ENCODE measurements at regions of chr19 and their contacts with region 1.

Region 1: DNA sequence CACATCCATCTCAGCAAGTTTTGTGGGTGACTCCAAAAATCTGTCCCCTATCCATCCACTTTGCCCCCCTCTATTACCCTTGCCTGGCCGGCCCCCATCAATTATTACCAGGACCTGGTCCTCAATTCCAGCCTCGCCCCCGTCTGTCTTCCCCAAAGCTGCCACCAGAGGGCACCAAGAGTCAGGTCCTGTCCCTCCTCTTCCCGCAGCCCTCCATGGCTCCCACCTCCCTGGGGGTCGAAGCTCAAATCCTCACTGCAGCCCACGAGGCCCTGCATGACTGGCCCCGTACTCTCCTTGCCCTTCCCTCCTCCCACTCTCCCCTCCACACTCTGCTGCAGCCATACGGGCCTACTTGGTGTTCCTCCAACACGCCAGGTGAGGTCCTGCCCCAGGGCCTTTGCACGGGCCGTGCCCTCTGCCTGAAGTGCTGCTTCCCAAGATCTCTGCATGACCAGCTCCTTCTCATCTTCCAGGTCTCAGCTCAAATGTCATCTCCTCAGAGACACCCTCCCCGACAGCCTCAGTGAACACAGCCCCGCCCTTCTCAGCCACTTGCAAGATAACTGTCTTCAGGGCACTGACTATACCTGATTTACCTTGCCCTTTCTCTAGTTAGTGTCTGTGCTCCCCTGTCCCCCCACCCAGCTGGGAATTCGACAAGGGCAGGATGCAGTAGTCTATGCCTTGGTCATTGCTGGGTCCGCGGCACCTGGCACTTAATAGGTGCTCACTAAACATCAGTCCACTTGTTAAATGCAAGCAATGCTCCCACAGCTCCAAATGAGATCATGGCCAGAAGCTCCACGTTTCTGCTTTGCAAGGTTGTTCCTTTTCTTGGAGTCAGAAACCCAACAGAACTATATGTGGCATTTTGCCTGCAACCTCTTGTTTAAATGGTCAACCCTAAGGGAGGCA is 16.8 kb upstream of the SEMA6B start:
- DNase-seq: peak; percentile 68 to 87 (median 86)
- ATAC-seq: peak in 1 of 2 donors; percentile 66
- H3K4me3 ChIP-seq: no peak overlapping the region
- H3K27ac ChIP-seq: no peak overlapping the region
- H3K4me1 ChIP-seq: no peaks in the 10 kb centered on the region
- H3K27me3 ChIP-seq: no peaks in the 10 kb centered on the region

Region 2: DNA sequence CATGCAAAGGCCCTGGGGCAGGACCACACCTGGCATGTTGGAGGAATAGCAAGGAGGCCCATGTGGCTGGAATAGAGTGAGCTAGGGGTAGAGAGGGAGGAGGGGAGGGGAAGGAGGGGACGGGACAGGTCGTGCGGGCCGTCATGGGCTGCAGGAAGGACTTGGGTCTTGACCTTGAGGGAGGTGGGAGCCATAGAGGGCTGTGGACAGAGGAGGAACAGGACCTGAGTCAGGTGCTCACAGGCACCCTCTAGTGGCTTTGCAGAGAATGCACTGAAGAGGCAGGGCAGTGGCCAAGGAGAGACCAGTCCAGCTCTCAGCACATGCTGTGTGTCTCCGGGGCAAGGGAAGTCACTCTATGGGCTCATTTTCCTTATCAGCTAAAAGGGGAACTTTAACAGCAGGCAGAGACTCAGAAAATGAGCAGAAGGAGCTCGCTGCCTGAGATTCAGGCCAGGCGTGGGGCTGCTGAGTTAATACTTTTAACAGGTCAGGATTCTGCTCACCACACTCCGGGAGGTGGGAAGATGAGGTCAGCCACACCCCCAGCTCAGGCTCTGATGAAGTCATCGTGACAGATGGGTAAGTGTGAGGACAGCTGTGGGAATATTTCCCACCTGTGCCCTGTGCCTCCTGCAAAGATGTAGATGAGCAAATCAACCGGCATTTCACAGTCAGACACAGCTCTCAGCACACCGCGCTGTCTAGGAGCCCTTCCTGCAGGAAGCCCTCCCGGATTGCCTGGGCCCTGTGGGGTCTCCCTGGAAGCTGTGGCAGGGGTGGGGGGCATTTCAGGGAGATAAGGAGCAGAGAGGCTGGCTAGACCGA is 57.1 kb after region 1 on chr19:
- intact Hi-C with region 1: loop called (anchors 5 kb)
- DNase-seq: peak; percentile 53 to 76 (median 70)
- ATAC-seq: peak; percentile 61 to 73
- H3K4me3 ChIP-seq: no peak overlapping the region
- H3K27ac ChIP-seq: no peak overlapping the region
- H3K4me1 ChIP-seq: no peaks in the 10 kb centered on the region
- H3K27me3 ChIP-seq: no peaks in the 10 kb centered on the region

Region 3: DNA sequence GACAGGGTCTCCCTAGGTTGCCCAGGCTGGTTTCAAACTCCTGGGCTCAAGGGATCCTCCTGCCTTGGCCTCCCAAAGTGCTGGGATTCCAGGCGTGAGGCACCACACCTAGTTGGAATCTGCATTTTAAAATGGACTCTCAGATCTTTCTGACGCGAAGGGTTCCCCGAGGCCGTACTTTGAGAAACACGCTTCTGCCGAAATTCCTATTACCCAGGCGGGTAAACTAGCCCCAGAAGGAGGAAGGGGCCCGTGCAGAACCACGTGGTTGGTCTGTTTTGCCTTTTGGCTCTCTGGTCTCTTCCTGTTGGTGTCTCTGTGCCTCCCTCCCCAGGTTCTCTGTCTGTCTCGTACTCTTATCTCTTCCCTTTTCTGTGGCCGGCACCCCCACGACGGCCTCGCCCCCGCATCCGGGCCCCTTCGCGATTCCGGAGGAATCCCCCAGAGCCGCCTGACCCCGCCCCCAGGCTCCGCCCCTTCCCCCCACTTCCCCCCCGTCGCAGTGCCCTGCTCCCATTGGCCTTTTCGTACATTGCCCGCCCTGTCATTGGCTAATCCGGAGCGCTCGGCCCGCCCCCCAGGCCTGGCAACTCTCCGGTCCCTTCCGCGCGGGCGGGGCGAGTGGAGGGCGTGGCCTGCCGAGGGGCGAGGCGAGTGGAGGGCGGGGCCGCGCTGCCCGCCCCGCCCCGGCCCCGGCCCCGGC is 62.7 kb after region 1 on chr19 and contains the start of gene TNFAIP8L1:
- intact Hi-C with region 1: loop called (anchors 5 kb)
- DNase-seq: peak; percentile 96 to 98 (median 98)
- ATAC-seq: peak; percentile 93 to 96
- H3K4me3 ChIP-seq: peak within 1 kb of the TSS; percentile 55
- H3K27ac ChIP-seq: peak within 1 kb of the TSS; percentile 30
- H3K4me1 ChIP-seq: no peaks in the 10 kb centered on the region
- H3K27me3 ChIP-seq: no peaks in the 10 kb centered on the region
- total RNA-seq, gene TNFAIP8L1: 2.8 to 5.6 (median 4.6) TPM

Region 4: GRCh38 chr19:5031231-5032100 is 455.2 kb after region 1 on chr19:
- intact Hi-C with region 1: no loop called
- DNase-seq: peak; percentile 79 to 94 (median 93)
- ATAC-seq: peak; percentile 81 to 83
- H3K4me3 ChIP-seq: no peak overlapping the region
- H3K27ac ChIP-seq: no peak overlapping the region
- H3K4me1 ChIP-seq: peaks cover 2% of the 10 kb centered on the region
- H3K27me3 ChIP-seq: no peaks in the 10 kb centered on the region

Measured in right cardiac atrium (tissue), 5 donors.